ENCODE measurements at regions of chr2 and their contacts with region 1.

Region 1: GRCh38 chr2:50529600-50530218 is 502.2 kb downstream of the NRXN1 start:
- DNase-seq: peak in 1 of 2 experiments; percentile 35
- H3K4me3 ChIP-seq: no peak overlapping the region
- H3K4me3 Mint-ChIP-seq: no peak overlapping the region
- H3K27ac Mint-ChIP-seq: no peak overlapping the region
- H3K4me1 ChIP-seq: no peaks in the 10 kb centered on the region
- H3K4me1 Mint-ChIP-seq: no peaks in the 10 kb centered on the region
- H3K27me3 ChIP-seq: no peaks in the 10 kb centered on the region
- H3K27me3 Mint-ChIP-seq: no peaks in the 10 kb centered on the region
- CTCF ChIP-seq: peak; percentile 64 to 72

Region 2: GRCh38 chr2:51093016-51093415 is 563.3 kb after region 1 on chr2:
- CTCF ChIA-PET with region 1: no interaction called
- POLR2A ChIA-PET with region 1: no interaction called
- intact Hi-C with region 1: no loop called
- DNase-seq: no peak
- H3K4me3 ChIP-seq: no peak overlapping the region
- H3K4me3 Mint-ChIP-seq: no peak overlapping the region
- H3K27ac Mint-ChIP-seq: no peak overlapping the region
- H3K4me1 ChIP-seq: no peaks in the 10 kb centered on the region
- H3K4me1 Mint-ChIP-seq: no peaks in the 10 kb centered on the region
- H3K27me3 ChIP-seq: no peaks in the 10 kb centered on the region
- H3K27me3 Mint-ChIP-seq: no peaks in the 10 kb centered on the region
- CTCF ChIP-seq: no peak

Region 3: GRCh38 chr2:51165534-51166260 is 636.0 kb after region 1 on chr2:
- CTCF ChIA-PET with region 1: no interaction called
- POLR2A ChIA-PET with region 1: no interaction called
- intact Hi-C with region 1: loop called (anchors 10 kb)
- DNase-seq: no peak
- H3K4me3 ChIP-seq: no peak overlapping the region
- H3K4me3 Mint-ChIP-seq: no peak overlapping the region
- H3K27ac Mint-ChIP-seq: no peak overlapping the region
- H3K4me1 ChIP-seq: no peaks in the 10 kb centered on the region
- H3K4me1 Mint-ChIP-seq: no peaks in the 10 kb centered on the region
- H3K27me3 ChIP-seq: no peaks in the 10 kb centered on the region
- H3K27me3 Mint-ChIP-seq: no peaks in the 10 kb centered on the region
- CTCF ChIP-seq: no peak

Measured in Caco-2 (cell line).